Right ventricle myocardium inferior (tissue), 1 donor: ENCODE measurements at regions of chr4 and their contacts with region 1.

Region 1: DNA sequence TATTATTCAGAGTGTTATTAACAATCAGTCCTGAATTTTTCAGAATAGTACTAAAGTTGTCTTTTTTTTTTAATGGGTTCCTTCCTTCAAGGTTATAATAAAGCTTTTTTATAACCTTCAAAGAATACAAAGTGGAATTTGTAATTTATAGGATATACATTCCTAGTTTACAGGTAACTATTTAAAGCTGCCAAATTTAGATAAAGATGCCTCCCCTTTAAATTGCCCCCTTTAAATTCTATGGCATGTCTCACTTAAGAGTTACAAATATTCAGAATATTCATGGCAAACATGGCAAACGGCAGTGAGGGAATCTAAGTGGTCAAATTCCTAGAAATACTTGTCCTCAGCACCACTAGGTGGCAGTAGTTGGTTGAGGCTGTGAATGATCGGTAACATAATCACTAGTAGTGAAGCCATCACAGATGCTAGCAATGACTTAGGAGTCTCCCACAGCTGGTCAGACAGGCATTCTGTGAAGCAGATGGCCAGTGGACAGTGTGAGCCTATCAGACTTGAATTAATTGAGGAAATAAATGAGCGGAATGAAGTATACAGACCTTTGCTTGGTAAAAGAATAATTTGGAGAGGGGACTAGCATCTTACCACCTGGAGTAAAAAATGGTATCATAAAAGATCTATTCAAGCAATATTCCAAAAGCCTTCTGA is 86.4 kb downstream of the CBR4 start:
- DNase-seq: no peak
- ATAC-seq: peak; percentile 35

Region 2: GRCh38 chr4:168514249-168514852 is 409.3 kb before region 1 on chr4:
- intact Hi-C with region 1: loop called (anchors 5 kb)
- DNase-seq: no peak
- ATAC-seq: no peak

Region 3: GRCh38 chr4:168710353-168710946 is 213.2 kb before region 1 on chr4:
- intact Hi-C with region 1: loop called (anchors 2 kb)
- DNase-seq: no peak
- ATAC-seq: peak; percentile 69

Region 4: GRCh38 chr4:169033660-169034059 is 110.0 kb after region 1 on chr4:
- intact Hi-C with region 1: no loop called
- DNase-seq: no peak
- ATAC-seq: no peak

Region 5: DNA sequence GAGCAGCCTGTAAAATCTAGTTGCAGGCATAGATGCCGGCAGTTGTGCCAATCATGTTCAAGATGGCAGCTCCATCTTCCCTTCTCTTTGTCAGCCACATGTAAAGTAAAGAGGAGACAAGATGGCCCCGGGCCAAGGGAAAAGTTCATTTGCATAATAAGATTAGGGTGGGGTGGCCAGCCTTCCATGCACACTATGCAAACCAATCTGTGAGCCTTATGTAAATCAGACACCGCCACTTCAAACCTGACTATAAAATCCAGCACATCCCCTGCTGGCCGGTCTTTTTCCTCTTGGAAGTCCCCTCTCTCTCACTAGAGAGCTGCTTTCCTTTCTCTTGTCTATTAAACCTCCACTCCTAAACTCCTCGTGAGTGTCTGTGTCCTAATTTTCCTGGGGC is 165.3 kb after region 1 on chr4:
- intact Hi-C with region 1: no loop called
- DNase-seq: no peak
- ATAC-seq: no peak

Region 6: DNA sequence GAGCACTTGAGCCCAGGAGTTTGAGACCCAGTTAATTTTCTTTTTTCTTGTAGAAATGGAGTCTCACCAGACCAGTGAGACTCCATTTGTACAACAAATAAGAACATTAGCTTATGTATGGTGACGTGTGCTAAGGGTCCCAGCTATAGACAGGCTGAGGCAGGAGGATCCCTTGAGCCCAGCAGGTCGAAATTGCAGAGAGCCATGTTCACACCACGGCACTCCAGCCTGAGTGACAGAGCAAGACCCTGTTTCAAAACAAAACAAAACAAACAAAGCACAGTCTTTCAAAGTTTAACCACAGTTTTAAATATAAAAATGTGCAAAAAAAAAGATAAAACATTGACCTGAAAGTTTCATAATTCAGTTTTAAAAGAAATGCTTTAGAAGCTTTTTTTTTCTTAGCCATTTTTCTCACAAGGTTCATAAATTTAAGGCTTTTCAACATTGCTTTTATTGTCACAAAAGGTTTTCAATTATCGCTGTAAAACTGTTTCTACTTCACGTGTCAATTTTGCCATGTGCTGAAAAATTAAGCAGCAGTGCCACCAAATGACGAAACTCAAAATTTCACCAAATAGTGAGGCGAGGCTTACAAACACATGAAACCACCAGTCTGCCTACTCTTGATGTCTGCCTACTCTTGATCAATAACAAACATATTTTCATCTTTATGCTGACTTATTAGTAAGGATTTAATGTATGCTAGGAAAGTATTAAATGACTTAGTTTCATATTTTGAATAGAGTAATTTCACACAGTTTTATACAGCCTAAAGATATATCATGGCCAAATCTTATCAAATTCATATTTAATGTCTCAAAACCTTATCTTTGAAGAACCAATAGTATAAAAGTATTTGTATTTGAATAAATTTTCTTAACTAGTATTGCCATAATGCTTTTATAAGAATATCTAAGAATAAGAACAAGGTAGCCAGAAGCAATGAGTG is 562.4 kb after region 1 on chr4:
- intact Hi-C with region 1: loop called (anchors 1 kb)
- DNase-seq: no peak
- ATAC-seq: no peak

Region 7: DNA sequence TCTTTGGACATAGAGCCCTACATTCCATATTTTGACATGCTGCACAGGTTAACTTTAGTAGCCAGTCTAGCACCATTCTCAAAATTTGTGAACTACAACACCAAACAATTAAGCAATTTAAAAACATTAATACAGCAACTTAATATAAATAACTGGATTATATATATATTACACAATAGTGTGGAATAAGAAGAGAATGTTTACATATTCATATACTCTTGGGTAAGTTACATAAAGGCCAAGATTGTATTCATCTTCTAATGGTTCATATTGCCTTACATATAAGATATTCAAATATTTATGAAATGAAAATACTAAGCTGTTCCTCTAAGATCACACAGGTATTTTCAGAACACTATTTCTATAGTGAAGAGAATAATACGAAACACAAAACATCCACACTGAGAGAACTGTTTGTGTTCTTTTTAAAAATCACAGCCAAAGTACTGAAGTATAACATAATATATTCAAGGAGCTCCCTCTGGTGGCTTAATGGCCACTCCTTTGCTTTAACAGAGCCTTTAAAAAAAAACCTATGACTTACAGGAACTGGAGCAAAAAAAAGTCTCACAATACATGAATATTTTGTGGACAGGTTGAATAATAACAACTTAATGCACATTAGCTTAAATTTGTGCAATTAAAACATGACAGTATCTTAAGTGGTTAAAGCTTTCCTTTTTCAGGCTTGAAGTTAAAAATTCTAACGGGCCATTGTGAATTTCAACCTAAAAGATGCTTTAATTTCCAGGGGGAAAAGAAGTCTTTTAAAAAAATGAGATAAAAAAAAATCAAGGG is 642.6 kb after region 1 on chr4:
- intact Hi-C with region 1: loop called (anchors 5 kb)
- DNase-seq: no peak
- ATAC-seq: peak; percentile 54

Region 8: GRCh38 chr4:169975838-169976796 is 1052.5 kb after region 1 on chr4:
- intact Hi-C with region 1: no loop called
- DNase-seq: no peak
- ATAC-seq: no peak